Psoas muscle (tissue), 8 donors: ENCODE measurements at regions of chr18 and their contacts with region 1.

Region 1: DNA sequence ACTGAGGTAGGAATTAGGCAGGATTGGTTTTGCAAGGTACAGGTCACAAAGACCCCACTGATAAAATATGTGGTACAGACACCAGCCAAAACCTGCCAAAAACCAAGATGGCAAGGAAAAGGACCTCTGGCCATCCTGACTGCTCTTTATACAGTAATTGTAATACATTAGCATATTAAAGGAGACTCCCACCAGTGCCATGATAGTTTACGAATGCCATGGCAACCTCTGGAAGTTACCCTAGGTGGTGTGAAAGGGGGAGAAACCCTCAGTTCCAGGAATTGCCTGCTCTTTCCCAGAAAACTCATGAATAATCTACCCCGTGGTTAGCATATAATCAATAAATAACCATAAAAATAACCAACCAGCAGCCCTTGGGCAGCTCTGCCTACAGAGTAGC is 129.8 kb upstream of the EPB41L3 start:
- DNase-seq: no peak
- ATAC-seq: no peak
- H3K4me3 ChIP-seq: no peak overlapping the region
- H3K27ac ChIP-seq: no peak overlapping the region
- H3K4me1 ChIP-seq: no peaks in the 10 kb centered on the region
- H3K27me3 ChIP-seq: no peaks in the 10 kb centered on the region
- CTCF ChIP-seq: no peak

Region 2: DNA sequence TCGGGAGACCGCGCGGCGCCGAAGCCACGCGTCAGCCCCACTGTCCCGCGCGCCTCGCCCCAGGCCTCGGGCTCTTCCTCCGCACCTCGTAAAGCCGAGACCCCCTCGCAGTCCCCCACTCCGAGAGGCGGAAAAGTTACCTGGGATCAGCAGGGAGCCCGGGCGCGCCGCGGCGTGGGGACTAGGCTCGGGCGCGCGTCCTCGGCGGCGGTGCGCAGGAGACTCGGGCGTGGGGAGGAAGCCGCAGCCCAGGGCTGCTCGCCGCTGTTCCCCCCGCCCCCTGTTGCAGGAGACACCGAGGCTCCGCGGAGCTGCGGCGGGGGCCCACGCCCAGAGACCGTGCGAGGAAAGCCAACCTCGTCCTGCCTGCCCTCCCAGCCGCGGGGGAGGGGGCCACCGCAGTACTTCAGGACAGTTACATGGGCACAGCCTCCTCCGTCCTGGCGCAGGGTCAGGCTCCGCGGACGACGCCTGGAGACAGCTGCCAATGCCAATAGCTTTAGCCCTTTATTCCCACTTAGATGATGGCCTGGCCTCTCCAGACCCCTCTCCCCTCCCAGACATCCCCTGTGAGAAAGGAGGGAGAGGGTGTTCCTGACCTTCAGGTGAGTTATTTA is 129.7 kb before region 1 on chr18 and contains the start of gene EPB41L3:
- intact Hi-C with region 1: no loop called
- DNase-seq: peak; percentile 65 to 70
- ATAC-seq: peak; percentile 19 to 85 (median 66)
- H3K4me3 ChIP-seq: peak within 1 kb of the TSS; percentile 65
- H3K27ac ChIP-seq: peak within 1 kb of the TSS; percentile 46
- H3K4me1 ChIP-seq: peaks cover 5% of the 10 kb centered on the region
- H3K27me3 ChIP-seq: peaks cover 0 to 40% (median 6%) of the 10 kb centered on the region in 3 donors
- CTCF ChIP-seq: no peak
- total RNA-seq, gene EPB41L3: 6.0 to 23.6 (median 7.6) TPM

Region 3: GRCh38 chr18:5720132-5720531 is 46.6 kb after region 1 on chr18:
- intact Hi-C with region 1: loop called in 1 of 2 experiments (anchors 5 kb)
- DNase-seq: no peak
- ATAC-seq: no peak
- H3K4me3 ChIP-seq: no peak overlapping the region
- H3K27ac ChIP-seq: no peak overlapping the region
- H3K4me1 ChIP-seq: no peaks in the 10 kb centered on the region
- H3K27me3 ChIP-seq: no peaks in the 10 kb centered on the region
- CTCF ChIP-seq: no peak